ENCODE measurements at regions of chr3 and their contacts with region 1.

Region 1: GRCh38 chr3:11570789-11571495 is 72.8 kb downstream of the VGLL4 start:
- DNase-seq: no peak
- ATAC-seq: peak; percentile 63
- H3K4me3 ChIP-seq: no peak overlapping the region
- H3K27ac ChIP-seq: peak overlapping the region; percentile 66
- H3K4me1 ChIP-seq: peaks cover 18% of the 10 kb centered on the region
- H3K27me3 ChIP-seq: no peaks in the 10 kb centered on the region
- CTCF ChIP-seq: no peak

Region 2: GRCh38 chr3:11638495-11639358 is 67.8 kb after region 1 on chr3:
- intact Hi-C with region 1: loop called (anchors 10 kb)
- DNase-seq: no peak
- ATAC-seq: no peak
- H3K4me3 ChIP-seq: peak overlapping the region; percentile 19
- H3K27ac ChIP-seq: peak overlapping the region; percentile 93
- H3K4me1 ChIP-seq: peaks cover 70% of the 10 kb centered on the region
- H3K27me3 ChIP-seq: no peaks in the 10 kb centered on the region
- CTCF ChIP-seq: no peak